ENCODE measurements at regions of chr3 and their contacts with region 1.

Region 1: DNA sequence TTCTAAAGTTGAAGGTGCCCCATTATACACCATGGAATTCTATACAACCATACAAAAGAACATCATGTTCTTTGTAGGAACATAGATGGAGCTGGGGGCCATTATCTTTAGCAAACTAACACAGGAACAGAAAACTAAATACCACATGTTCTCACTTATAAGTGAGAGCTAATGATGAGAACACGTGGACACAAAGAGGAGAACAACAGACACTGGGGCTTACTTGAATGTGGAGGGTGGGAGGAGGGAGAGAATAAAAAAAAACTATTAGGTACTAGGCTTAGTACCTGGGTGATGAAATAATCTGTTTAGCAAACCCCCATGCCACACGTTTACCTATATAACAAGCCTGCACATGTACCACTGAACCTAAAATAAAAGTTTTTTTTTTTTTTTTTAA is 342.7 kb downstream of the PLCL2 start:
- DNase-seq: no peak
- H3K4me3 ChIP-seq: no peak overlapping the region
- H3K27ac ChIP-seq: no peak overlapping the region
- H3K4me1 ChIP-seq: no peaks in the 10 kb centered on the region
- H3K27me3 ChIP-seq: no peaks in the 10 kb centered on the region
- CTCF ChIP-seq: no peak
- EP300 ChIP-seq: no peak
- POLR2A ChIP-seq: no peak

Region 2: DNA sequence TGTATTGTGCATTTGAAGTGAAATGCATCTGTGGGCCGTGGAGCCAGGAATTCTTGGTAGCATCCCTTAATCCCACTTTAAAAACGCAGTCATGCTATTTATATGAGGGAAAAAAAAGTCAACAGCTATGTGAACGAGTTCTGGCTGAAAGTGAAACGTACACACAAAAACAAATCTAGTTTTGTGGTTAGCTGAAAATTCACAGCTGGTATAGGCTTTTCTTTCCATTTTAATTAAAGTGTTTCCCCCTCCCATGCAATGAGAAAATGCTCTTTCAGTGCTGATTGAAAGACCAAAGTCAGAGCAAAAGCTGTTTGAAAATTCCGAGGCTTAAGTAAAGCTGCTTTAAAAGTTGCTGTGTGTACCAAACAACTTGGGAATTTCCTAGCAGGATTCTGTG is 45.3 kb before region 1 on chr3:
- in situ Hi-C with region 1: no loop called
- intact Hi-C with region 1: no loop called
- DNase-seq: no peak
- H3K4me3 ChIP-seq: no peak overlapping the region
- H3K27ac ChIP-seq: no peak overlapping the region
- H3K4me1 ChIP-seq: no peaks in the 10 kb centered on the region
- H3K27me3 ChIP-seq: no peaks in the 10 kb centered on the region
- CTCF ChIP-seq: no peak
- EP300 ChIP-seq: no peak
- POLR2A ChIP-seq: no peak

Region 3: GRCh38 chr3:18027161-18027939 is 799.9 kb after region 1 on chr3:
- in situ Hi-C with region 1: no loop called
- intact Hi-C with region 1: loop called (anchors 10 kb)
- DNase-seq: no peak
- H3K4me3 ChIP-seq: no peak overlapping the region
- H3K27ac ChIP-seq: no peak overlapping the region
- H3K4me1 ChIP-seq: no peaks in the 10 kb centered on the region
- H3K27me3 ChIP-seq: no peaks in the 10 kb centered on the region
- CTCF ChIP-seq: no peak
- EP300 ChIP-seq: no peak
- POLR2A ChIP-seq: no peak

Measured in transverse colon (tissue), 4 donors.